Cardiac septum (tissue), 1 donor: ENCODE measurements at regions of chr2 and their contacts with region 1.

Region 1: GRCh38 chr2:219029829-219030165 is 11.5 kb downstream of the CFAP65 start:
- DNase-seq: peak; percentile 90

Region 2: GRCh38 chr2:218618102-218618860 is 411.5 kb before region 1 on chr2:
- intact Hi-C with region 1: no loop called
- DNase-seq: no peak

Region 3: DNA sequence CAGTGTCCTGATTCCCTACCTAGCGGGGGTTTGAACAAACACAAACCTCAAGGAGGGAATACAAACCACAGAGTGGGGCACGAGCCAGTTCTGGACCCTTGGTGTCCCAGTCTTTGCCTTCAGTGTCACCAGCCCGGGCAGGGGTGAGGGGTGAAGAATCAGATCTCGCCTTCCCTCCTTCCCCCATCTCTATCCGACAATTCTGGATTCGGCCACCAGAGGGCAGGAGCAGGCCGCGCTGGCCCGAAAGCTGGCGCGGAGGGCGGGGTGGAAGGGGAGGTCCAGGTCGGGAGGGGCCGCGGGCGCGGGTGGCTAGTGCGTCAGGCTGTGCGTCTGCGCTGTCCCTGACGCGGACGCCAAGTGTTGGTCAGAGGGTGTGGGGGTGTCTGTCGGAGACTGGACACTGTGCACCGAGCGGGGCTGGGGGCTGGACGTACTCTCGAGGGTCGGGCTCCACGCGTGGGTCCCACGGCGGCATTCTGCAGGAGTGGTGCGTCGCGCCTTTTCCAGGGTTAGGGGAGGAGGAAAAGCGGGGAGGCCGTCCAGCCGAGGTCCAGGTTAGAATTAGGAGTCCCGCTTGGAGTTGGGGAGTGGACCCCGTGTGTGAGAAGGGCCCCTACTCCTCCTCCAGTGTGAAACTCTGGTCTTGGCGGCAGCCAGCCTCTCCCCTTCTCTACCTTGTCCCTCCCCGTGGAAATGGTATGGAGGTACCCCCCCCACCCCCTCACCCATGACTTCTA is 33.7 kb before region 1 on chr2:
- intact Hi-C with region 1: no loop called
- DNase-seq: peak; percentile 89

Region 4: DNA sequence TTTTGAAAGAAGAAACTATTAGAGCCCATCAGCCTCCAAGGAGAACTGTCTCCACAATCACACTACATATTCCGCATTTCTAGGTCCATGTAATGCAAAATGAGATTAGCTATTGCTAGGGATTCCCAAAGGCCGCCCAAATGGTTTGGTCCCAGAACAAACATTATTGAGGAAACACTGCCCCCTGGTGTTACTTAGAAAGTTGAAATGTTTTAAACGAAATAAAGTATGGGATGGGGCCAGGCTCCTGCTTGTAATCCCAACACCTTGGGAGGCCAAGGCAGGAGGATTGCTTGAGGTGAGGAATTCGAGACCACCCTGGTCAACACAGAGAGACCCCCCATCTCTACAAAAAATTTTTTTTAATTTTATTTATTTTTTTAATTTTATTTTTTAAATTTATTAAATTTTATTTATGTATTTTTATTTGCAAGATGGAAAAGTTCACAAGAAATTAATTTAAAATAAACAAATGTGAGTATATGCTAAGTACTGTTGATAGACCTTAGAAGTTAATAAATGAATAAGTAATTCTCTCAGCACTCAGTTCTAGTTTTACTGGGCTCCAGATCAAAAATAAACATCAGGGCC is 125.4 kb after region 1 on chr2:
- intact Hi-C with region 1: loop called (anchors 1 kb)
- DNase-seq: no peak

Region 5: GRCh38 chr2:219769090-219769910 is 739.5 kb after region 1 on chr2:
- intact Hi-C with region 1: no loop called
- DNase-seq: peak; percentile 88